A549 (cell line): ENCODE measurements at regions of chr3 and their contacts with region 1.

Region 1: GRCh38 chr3:69120879-69121464 is 1.4 kb downstream of the LMOD3 start:
- DNase-seq: peak; percentile 21 to 85
- ATAC-seq: peak; percentile 64 to 84; a peak in 5 of 6 replicates
- H3K4me3 ChIP-seq: no peak overlapping the region
- H3K27ac ChIP-seq: no peak overlapping the region
- H3K4me1 ChIP-seq: no peaks in the 10 kb centered on the region
- CTCF ChIP-seq: peak; percentile 79
- EP300 ChIP-seq: no peak
- POLR2A ChIP-seq: no peak
- RAD21 ChIP-seq: peak; percentile 72 to 79

Region 2: DNA sequence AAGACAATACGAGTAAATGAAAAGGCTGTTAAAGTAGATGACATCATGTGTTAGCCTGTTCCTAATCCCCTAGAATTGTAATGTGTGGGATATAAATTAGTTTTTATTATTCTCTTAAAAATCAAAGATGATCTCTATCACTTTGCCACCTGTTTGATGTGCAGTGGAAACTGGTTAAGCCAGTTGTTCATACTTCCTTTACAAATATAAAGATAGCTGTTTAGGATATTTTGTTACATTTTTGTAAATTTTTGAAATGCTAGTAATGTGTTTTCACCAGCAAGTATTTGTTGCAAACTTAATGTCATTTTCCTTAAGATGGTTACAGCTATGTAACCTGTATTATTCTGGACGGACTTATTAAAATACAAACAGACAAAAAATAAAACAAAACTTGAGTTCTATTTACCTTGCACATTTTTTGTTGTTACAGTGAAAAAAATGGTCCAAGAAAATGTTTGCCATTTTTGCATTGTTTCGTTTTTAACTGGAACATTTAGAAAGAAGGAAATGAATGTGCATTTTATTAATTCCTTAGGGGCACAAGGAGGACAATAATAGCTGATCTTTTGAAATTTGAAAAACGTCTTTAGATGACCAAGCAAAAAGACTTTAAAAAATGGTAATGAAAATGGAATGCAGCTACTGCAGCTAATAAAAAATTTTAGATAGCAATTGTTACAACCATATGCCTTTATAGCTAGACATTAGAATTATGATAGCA is 15.8 kb before region 1 on chr3:
- CTCF ChIA-PET with region 1: interaction called, 19 read pairs
- POLR2A ChIA-PET with region 1: interaction called, 4 read pairs
- DNase-seq: no peak
- ATAC-seq: no peak
- H3K4me3 ChIP-seq: no peak overlapping the region
- H3K27ac ChIP-seq: no peak overlapping the region
- H3K4me1 ChIP-seq: no peaks in the 10 kb centered on the region
- CTCF ChIP-seq: no peak
- EP300 ChIP-seq: no peak
- POLR2A ChIP-seq: no peak
- RAD21 ChIP-seq: no peak

Region 3: GRCh38 chr3:69368129-69368741 is 247.3 kb after region 1 on chr3:
- CTCF ChIA-PET with region 1: no interaction called
- POLR2A ChIA-PET with region 1: no interaction called
- DNase-seq: no peak
- ATAC-seq: no peak
- H3K4me3 ChIP-seq: no peak overlapping the region
- H3K27ac ChIP-seq: no peak overlapping the region
- H3K4me1 ChIP-seq: no peaks in the 10 kb centered on the region
- CTCF ChIP-seq: no peak
- EP300 ChIP-seq: no peak
- POLR2A ChIP-seq: no peak
- RAD21 ChIP-seq: no peak

Region 4: GRCh38 chr3:69410250-69410649 is 289.3 kb after region 1 on chr3:
- CTCF ChIA-PET with region 1: interaction called, 10 read pairs
- POLR2A ChIA-PET with region 1: no interaction called
- DNase-seq: peak; percentile 21 to 60
- ATAC-seq: peak; percentile 94 to 96
- H3K4me3 ChIP-seq: no peak overlapping the region
- H3K27ac ChIP-seq: no peak overlapping the region
- H3K4me1 ChIP-seq: no peaks in the 10 kb centered on the region
- CTCF ChIP-seq: peak; percentile 51
- EP300 ChIP-seq: no peak
- POLR2A ChIP-seq: no peak
- RAD21 ChIP-seq: peak; percentile 44 to 47; a peak in 4 of 5 replicates